ENCODE measurements at regions of chr9 and their contacts with region 1.

Region 1: DNA sequence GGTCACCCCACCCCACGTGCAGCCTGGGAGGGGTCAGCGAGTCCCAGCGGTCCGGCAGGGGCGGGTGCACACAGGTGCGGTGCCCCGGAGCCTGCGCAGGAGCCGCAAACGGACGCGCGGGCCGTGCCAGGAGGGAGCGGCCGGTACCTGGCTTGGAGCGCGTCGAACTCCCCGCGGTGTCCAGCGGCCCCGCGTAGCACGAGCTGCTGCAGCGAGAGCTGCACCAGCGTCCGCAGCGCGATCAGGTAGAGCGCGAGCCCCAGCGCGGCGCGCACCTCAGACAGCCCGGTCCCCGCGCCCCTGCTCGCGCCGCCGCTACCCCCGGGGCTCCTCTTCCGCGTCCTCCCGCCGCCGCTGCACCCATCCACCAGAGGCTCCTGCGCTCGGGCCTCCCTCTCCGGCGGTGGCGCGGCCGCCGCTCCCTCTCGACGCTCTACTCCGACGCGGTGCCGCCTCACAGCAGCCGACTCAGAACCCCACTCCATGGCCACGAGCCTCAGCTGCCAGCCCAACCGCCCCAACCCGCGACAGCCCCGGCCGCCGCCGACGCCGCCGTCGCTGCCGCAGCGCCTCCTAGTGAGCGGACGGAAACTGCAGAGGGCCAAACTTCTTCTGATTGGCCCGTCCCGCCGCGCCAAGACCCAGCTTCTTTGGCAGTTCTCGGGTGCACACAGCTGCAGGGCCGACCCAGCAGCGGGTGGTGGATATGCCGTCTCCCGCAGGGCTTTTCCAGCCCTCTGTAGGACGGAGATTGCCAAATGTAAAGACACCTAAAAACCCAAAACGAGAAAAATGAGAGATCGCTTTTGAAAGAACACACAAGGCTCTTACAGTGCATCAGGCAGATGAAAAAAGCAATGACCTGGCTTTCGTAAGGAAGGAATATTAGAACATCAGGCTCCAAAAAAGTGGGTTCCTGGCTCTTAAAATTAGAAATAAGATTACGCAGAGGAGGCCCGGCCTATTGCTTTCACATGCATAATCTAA is at the start of gene ERMP1:
- DNase-seq: peak; percentile 89
- H3K4me3 Mint-ChIP-seq: peak within 1 kb of the TSS; percentile 92
- H3K27ac Mint-ChIP-seq: peak within 1 kb of the TSS; percentile 82
- H3K4me1 Mint-ChIP-seq: peaks cover 62% of the 10 kb centered on the region
- H3K27me3 Mint-ChIP-seq: no peaks in the 10 kb centered on the region
- total RNA-seq, gene ERMP1: 23.1 and 24.1 TPM in 2 replicates

Region 2: GRCh38 chr9:5764130-5764868 is 68.5 kb before region 1 on chr9:
- intact Hi-C with region 1: loop called (anchors 2 kb)
- DNase-seq: no peak
- H3K4me3 Mint-ChIP-seq: peak overlapping the region; percentile 25
- H3K27ac Mint-ChIP-seq: peak overlapping the region; percentile 27
- H3K4me1 Mint-ChIP-seq: peaks cover 57% of the 10 kb centered on the region
- H3K27me3 Mint-ChIP-seq: no peaks in the 10 kb centered on the region

Region 3: GRCh38 chr9:5786370-5787127 is 46.3 kb before region 1 on chr9:
- intact Hi-C with region 1: loop called (anchors 5 kb)
- DNase-seq: no peak
- H3K4me3 Mint-ChIP-seq: no peak overlapping the region
- H3K27ac Mint-ChIP-seq: no peak overlapping the region
- H3K4me1 Mint-ChIP-seq: peaks cover 60% of the 10 kb centered on the region
- H3K27me3 Mint-ChIP-seq: no peaks in the 10 kb centered on the region

Region 4: GRCh38 chr9:5843794-5844504 is 11.1 kb after region 1 on chr9:
- intact Hi-C with region 1: loop called (anchors 1 kb)
- DNase-seq: no peak
- H3K4me3 Mint-ChIP-seq: peak overlapping the region; percentile 69
- H3K27ac Mint-ChIP-seq: peak overlapping the region; percentile 88
- H3K4me1 Mint-ChIP-seq: peaks cover 88% of the 10 kb centered on the region
- H3K27me3 Mint-ChIP-seq: no peaks in the 10 kb centered on the region

Measured in activated T-helper 1 cell treated with anti-CD3 and anti-CD28 coated beads, Interleukin-12 subunit alpha, Interleukin-12 subunit beta, Interleukin-2, Interleukin-4 antibody, amounts not matched to agents 30 ng/mL and 10 ng/mL and 1 ng/mL, durations not matched to agents 14 hours and 24 hours and 36 hours (primary cell).